ENCODE measurements at regions of chr10 and their contacts with region 1.

Region 1: DNA sequence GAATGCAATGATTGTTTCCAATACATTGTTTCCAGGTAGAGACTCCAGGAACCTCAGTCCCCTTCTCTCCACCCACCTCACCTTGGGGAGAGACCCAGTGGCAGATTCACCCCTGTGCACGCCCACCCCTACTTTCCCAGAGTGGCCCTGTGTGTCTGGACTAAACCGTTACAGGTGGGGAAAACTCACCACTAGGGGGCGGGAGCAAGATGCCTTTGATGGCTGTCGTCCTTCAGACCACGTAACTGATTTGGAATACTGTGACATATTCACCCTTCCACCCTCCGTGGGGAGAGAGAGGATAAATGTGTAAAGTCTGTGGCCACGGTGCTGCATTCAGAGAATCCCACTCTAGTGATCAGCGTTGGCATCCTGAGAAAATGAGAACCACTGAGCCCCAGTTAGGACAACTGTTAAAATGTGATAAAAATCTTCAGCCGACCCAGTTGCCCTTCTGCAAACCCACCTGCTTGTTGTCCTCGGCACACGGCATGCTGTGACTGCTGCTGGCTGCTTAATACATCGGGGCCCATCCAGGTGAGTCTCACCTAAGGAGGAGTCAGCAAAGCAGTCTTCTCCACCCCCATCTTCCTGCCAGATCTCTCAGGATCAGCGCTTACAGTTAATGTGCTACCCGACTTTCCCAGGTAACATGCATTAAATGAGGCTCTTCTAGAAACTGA is 41.5 kb upstream of the NMT2 start:
- DNase-seq: peak; percentile 94
- H3K4me3 Mint-ChIP-seq: no peak overlapping the region
- H3K27ac Mint-ChIP-seq: no peak overlapping the region
- H3K4me1 Mint-ChIP-seq: peaks cover 46% of the 10 kb centered on the region
- H3K27me3 Mint-ChIP-seq: no peaks in the 10 kb centered on the region

Region 2: DNA sequence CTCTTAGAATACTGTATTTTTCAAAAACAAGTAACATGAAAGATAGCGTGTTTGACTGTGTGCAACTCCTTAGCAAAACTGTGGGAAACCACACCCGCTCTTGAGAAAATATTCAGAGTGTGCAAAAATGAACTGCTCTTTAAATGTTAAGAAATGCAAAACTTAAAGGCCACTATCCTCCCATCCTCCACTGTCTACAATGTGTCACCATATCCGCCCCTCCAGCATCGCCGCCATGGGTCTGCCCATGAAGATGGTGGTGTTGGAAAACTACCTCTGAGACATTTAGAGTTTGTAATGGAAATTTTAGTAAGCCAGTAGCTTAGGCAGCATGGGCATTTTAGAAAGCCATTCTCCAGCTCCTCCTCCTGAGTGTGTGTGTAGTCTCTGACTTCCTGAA is 21.4 kb before region 1 on chr10:
- intact Hi-C with region 1: loop called (anchors 1 kb)
- DNase-seq: peak; percentile 79
- H3K4me3 Mint-ChIP-seq: peak overlapping the region; percentile 47
- H3K27ac Mint-ChIP-seq: peak overlapping the region; percentile 59
- H3K4me1 Mint-ChIP-seq: peaks cover 39% of the 10 kb centered on the region
- H3K27me3 Mint-ChIP-seq: no peaks in the 10 kb centered on the region

Region 3: GRCh38 chr10:15370856-15371701 is 161.1 kb after region 1 on chr10 and contains the start of gene FAM171A1:
- intact Hi-C with region 1: loop called (anchors 2 kb)
- DNase-seq: peak; percentile 89
- H3K4me3 Mint-ChIP-seq: peak within 1 kb of the TSS; percentile 78
- H3K27ac Mint-ChIP-seq: peak within 1 kb of the TSS; percentile 26
- H3K4me1 Mint-ChIP-seq: peaks cover 8% of the 10 kb centered on the region
- H3K27me3 Mint-ChIP-seq: peaks cover 62% of the 10 kb centered on the region
- total RNA-seq, gene FAM171A1: 1.7 TPM in 2 replicates

Measured in activated CD4-positive, alpha-beta T cell treated with anti-CD3 and anti-CD28 coated beads, Interleukin-2, amount 10 ng/mL, durations not matched to agents 24 days and 14 days (primary cell).